ENCODE measurements at regions of chr3 and their contacts with region 1.

Region 1: GRCh38 chr3:52197842-52198668 is at the start of gene ALAS1:
- DNase-seq: peak; percentile 75 to 98 (median 87)

Region 2: GRCh38 chr3:52154117-52155094 is 43.6 kb before region 1 on chr3 and contains the start of gene POC1A:
- intact Hi-C with region 1: loop called (anchors 1 kb)
- DNase-seq: peak; percentile 88 to 99 (median 95)

Region 3: GRCh38 chr3:52238761-52239701 is 41.0 kb after region 1 on chr3 and contains the start of gene TWF2:
- intact Hi-C with region 1: no loop called
- DNase-seq: peak; percentile 66 to 98 (median 83)

Region 4: GRCh38 chr3:52278510-52279069 is 80.5 kb after region 1 on chr3 and contains the start of gene WDR82:
- intact Hi-C with region 1: loop called (anchors 5 kb)
- DNase-seq: peak; percentile 97 to 100 (median 98)

Measured in posterior cingulate gyrus (tissue), 11 donors.